Mammary epithelial cell (primary cell): ENCODE measurements at regions of chr6 and their contacts with region 1.

Region 1: GRCh38 chr6:118968416-118968815 is 33.5 kb upstream of the MCM9 start:
- DNase-seq: peak; percentile 4
- H3K4me3 ChIP-seq: no peak overlapping the region
- H3K27ac ChIP-seq: no peak overlapping the region
- H3K4me1 ChIP-seq: no peaks in the 10 kb centered on the region
- H3K27me3 ChIP-seq: no peaks in the 10 kb centered on the region
- CTCF ChIP-seq: peak; percentile 28 to 40

Region 2: DNA sequence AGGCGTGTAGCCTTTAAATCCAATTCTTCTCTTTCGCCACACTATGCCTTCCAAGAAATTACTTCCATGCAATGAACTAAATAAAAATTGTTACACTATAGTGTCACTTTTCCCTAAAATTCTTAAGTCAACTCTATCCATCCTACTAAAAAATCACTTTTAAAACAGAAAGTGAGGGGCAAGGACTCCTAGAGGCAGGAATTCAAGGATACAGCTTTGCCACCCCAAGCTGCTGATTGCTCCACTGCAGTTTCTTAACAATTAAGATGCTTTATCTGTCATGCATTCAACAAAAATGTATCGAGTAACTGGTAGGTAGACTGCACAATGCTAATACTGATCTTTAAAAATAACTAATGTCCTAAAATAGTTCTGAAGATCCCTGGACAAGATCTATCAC is 37.7 kb before region 1 on chr6:
- CTCF ChIA-PET with region 1: no interaction called
- dilution Hi-C with region 1: no loop called
- in situ Hi-C with region 1: no loop called
- intact Hi-C with region 1: no loop called
- DNase-seq: no peak
- H3K4me3 ChIP-seq: no peak overlapping the region
- H3K27ac ChIP-seq: no peak overlapping the region
- H3K4me1 ChIP-seq: no peaks in the 10 kb centered on the region
- H3K27me3 ChIP-seq: no peaks in the 10 kb centered on the region
- CTCF ChIP-seq: peak in 1 of 2 donors; percentile 10

Region 3: DNA sequence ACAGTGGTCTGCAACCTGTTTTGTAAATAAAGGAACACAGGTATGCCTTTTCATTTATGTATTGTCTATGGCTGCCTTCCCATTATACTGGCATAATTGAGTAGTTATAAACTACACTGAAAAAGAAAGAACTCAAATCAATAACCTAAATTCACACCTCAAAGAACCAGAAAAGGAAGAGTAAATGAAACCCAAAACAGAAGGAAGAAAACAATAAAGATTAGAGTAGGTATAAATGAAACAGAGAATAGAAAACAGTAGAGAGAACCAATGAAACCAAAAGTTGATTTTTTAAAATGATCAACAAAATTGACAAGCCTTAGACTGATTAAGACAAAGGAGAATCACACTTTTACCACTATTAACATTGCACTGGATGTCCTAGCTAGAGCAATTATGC is 75.4 kb after region 1 on chr6:
- CTCF ChIA-PET with region 1: no interaction called
- dilution Hi-C with region 1: loop called (anchors 5 kb)
- in situ Hi-C with region 1: no loop called
- intact Hi-C with region 1: no loop called
- DNase-seq: no peak
- H3K4me3 ChIP-seq: no peak overlapping the region
- H3K27ac ChIP-seq: no peak overlapping the region
- H3K4me1 ChIP-seq: no peaks in the 10 kb centered on the region
- H3K27me3 ChIP-seq: no peaks in the 10 kb centered on the region
- CTCF ChIP-seq: no peak

Region 4: GRCh38 chr6:119100115-119100514 is 131.7 kb after region 1 on chr6:
- CTCF ChIA-PET with region 1: no interaction called
- dilution Hi-C with region 1: no loop called
- in situ Hi-C with region 1: loop called (anchors 5 to 25 kb)
- intact Hi-C with region 1: no loop called
- DNase-seq: no peak
- H3K4me3 ChIP-seq: no peak overlapping the region
- H3K27ac ChIP-seq: no peak overlapping the region
- H3K4me1 ChIP-seq: no peaks in the 10 kb centered on the region
- H3K27me3 ChIP-seq: no peaks in the 10 kb centered on the region
- CTCF ChIP-seq: no peak